ENCODE measurements at regions of chr1 and their contacts with region 1.

Region 1: GRCh38 chr1:147640553-147641165 is 29.7 kb downstream of the ACP6 start:
- DNase-seq: peak; percentile 68
- H3K4me3 ChIP-seq: no peak overlapping the region
- H3K27ac ChIP-seq: no peak overlapping the region
- H3K4me1 ChIP-seq: no peaks in the 10 kb centered on the region
- H3K27me3 ChIP-seq: no peaks in the 10 kb centered on the region
- CTCF ChIP-seq: peak; percentile 61 to 80 (median 70)
- POLR2A ChIP-seq: no peak

Region 2: GRCh38 chr1:147494998-147495580 is 145.6 kb before region 1 on chr1:
- intact Hi-C with region 1: loop called (anchors 5 kb)
- DNase-seq: peak; percentile 67
- H3K4me3 ChIP-seq: no peak overlapping the region
- H3K27ac ChIP-seq: no peak overlapping the region
- H3K4me1 ChIP-seq: no peaks in the 10 kb centered on the region
- H3K27me3 ChIP-seq: no peaks in the 10 kb centered on the region
- CTCF ChIP-seq: peak; percentile 56 to 88 (median 86)
- POLR2A ChIP-seq: no peak

Measured in prostate gland (tissue), 2 donors.